ENCODE measurements at regions of chr10 and their contacts with region 1.

Region 1: DNA sequence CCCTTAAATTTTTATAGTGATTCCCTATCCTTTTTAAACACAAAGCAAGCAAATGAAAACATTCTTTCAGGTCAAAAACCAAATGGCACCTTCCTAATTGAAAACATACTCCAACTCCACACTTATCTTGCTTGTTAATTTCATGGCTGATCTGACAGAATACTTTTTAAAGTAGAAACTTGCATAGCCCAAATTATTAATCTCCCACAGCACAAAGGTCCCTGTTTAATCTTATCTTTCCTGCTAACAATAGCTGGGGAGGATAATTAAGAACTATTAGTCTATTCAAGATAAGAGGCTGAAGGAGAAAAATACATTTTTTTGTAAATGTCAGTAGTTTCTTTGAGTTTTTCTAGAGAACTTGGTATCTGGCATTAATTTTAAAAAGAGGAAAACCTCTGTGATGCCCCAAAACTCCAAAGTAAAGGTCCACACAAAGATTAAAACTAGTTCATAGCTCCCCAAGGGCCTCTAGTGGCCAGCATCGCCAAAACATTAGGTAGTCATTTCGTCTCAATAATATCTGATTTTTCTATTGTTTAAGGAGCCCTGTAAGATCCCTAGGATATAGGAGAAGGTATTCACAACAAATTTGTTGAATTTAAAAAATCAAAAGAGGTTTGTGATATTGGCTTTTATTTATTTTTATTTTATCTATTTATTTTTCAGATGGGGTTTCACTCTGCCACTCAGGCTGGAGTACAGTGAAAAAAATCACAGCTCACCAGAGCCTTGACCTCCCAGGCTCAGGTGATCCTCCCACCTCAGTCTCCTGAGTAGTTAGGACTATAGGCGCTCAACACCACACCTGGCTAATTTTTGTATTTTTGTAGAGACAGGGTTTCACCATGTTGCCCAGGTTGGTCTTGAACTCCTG is 14.7 kb downstream of the CDNF start:
- DNase-seq: peak in 1 of 5 donors; percentile 32
- ATAC-seq: peak in 2 of 4 donors; percentile 34 to 43
- H3K4me3 ChIP-seq: no peak overlapping the region
- H3K27ac ChIP-seq: no peak overlapping the region
- H3K4me1 ChIP-seq: peaks cover 0 to 9% (median 2%) of the 10 kb centered on the region in 12 donors
- H3K27me3 ChIP-seq: no peaks in the 10 kb centered on the region
- CTCF ChIP-seq: peak in 11 of 12 donors; percentile 32 to 70 (median 55)
- POLR2A ChIP-seq: no peak

Region 2: DNA sequence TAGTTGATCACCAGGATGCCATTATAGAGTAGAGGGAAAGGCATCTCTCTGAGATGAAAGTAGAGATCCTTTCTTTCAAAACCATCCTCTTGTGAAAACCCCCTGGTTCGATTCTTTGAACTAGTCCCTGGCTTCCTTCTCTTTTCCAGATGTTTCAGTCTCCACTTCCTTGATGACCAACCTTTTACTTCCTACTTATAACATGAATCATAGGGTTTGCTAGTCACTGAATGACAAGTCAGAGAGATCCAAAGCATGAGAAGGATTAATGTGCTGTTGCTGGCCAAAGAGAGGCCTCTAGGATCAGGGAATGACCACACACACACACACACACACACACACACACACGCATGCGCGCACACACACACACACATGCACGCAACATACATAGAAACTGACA is 331.3 kb before region 1 on chr10:
- intact Hi-C with region 1: loop called in 3 of 10 experiments (anchors 5 to 10 kb)
- DNase-seq: no peak
- ATAC-seq: no peak
- H3K4me3 ChIP-seq: no peak overlapping the region
- H3K27ac ChIP-seq: no peak overlapping the region
- H3K4me1 ChIP-seq: no peaks in the 10 kb centered on the region
- H3K27me3 ChIP-seq: peaks cover 0 to 13% (median 4%) of the 10 kb centered on the region in 9 donors
- CTCF ChIP-seq: no peak
- POLR2A ChIP-seq: no peak

Region 3: DNA sequence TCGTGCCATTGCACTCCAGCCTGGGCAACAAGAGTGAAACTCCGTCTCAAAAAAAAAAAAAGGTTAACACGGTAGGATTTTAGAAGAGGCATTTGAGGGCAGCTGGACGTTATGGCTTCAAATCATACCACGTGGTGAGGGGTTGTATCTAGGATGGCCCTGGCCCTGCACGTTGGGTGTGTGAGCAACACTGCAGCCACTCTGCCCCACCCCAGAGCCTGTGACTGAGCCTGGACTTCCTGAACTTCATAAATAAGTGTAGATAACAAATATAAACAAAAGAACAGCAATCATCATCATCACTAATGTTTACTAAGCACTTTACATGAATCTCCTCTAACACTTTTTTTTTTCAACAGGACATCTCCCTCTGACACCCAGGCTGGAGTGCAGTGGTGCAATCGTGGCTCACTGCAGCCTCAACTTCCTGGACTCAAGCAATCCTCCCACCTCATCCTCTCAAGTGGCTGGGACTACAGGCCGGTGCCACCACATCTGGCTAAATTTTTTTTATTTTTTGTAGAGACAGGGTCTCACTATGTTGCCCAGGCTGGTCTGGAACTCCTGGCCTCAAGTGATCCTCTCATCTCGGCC is 322.8 kb before region 1 on chr10:
- intact Hi-C with region 1: loop called in 7 of 10 experiments (anchors 1 to 10 kb)
- DNase-seq: no peak
- ATAC-seq: no peak
- H3K4me3 ChIP-seq: no peak overlapping the region
- H3K27ac ChIP-seq: no peak overlapping the region
- H3K4me1 ChIP-seq: peaks cover 0 to 9% (median 0%) of the 10 kb centered on the region in 12 donors
- H3K27me3 ChIP-seq: no peaks in the 10 kb centered on the region
- CTCF ChIP-seq: no peak
- POLR2A ChIP-seq: no peak

Region 4: GRCh38 chr10:14507176-14507575 is 315.9 kb before region 1 on chr10:
- intact Hi-C with region 1: loop called in 2 of 10 experiments (anchors 5 to 10 kb)
- DNase-seq: no peak
- ATAC-seq: no peak
- H3K4me3 ChIP-seq: no peak overlapping the region
- H3K27ac ChIP-seq: no peak overlapping the region
- H3K4me1 ChIP-seq: no peaks in the 10 kb centered on the region
- H3K27me3 ChIP-seq: no peaks in the 10 kb centered on the region
- CTCF ChIP-seq: no peak
- POLR2A ChIP-seq: no peak

Region 5: GRCh38 chr10:14536241-14537213 is 286.6 kb before region 1 on chr10:
- intact Hi-C with region 1: loop called (anchors 2 to 10 kb)
- DNase-seq: peak; percentile 72 to 86 (median 75)
- ATAC-seq: peak; percentile 81 to 96 (median 90)
- H3K4me3 ChIP-seq: no peak overlapping the region
- H3K27ac ChIP-seq: peak overlapping the region in 2 of 12 donors; percentile 45 to 56
- H3K4me1 ChIP-seq: peaks cover 0 to 24% (median 4%) of the 10 kb centered on the region in 12 donors
- H3K27me3 ChIP-seq: no peaks in the 10 kb centered on the region
- CTCF ChIP-seq: peak; percentile 43 to 80 (median 63)
- POLR2A ChIP-seq: no peak

Region 6: GRCh38 chr10:14604181-14605142 is 218.7 kb before region 1 on chr10:
- intact Hi-C with region 1: loop called in 1 of 10 experiments (anchors 10 kb)
- DNase-seq: peak; percentile 80 to 93 (median 88)
- ATAC-seq: peak; percentile 76 to 97 (median 94)
- H3K4me3 ChIP-seq: peak overlapping the region; percentile 39 to 78 (median 65)
- H3K27ac ChIP-seq: peak overlapping the region in 10 of 12 donors; percentile 37 to 83 (median 70)
- H3K4me1 ChIP-seq: peaks cover 0 to 45% (median 14%) of the 10 kb centered on the region in 12 donors
- H3K27me3 ChIP-seq: no peaks in the 10 kb centered on the region
- CTCF ChIP-seq: no peak
- POLR2A ChIP-seq: peak in 1 of 2 donors; percentile 64

Measured in heart left ventricle (tissue), 16 donors.